Posterior vena cava (tissue), 2 donors: ENCODE measurements at regions of chr13 and their contacts with region 1.

Region 1: DNA sequence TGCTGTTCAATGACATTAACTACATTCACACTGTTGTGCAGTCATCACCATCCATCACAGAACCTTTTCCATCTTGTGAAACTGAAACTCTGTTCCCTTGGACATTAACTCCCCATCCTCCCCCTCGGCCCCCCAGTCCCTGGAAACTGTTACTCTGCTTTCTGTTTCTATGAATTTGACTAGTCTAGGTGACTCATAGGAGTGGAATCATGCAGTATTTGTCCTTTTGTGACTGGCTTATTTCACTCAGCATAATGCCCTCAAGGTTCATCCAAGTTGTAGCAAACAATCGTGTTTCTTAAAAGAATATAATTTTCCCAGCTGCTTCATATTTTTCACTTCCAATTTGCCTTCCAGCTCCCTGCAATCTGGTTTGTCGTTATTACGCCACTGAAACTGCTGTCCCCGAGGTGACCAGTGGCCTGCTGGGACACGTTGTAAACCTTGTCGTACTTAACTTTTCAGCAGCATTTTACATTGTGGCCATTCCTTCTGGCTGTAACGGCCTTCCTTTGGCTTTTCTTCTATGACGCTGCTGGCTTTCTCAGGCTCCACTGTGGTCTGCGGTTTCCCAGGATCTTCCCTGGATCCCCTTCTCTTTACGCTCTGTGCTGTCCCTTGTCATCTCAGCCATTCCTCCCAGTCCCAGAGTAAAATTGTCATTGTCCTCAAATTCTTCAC is 74.0 kb downstream of the DHRS12 start:
- DNase-seq: peak; percentile 90

Region 2: GRCh38 chr13:51222037-51222685 is 507.8 kb before region 1 on chr13 and contains the start of gene FAM124A:
- intact Hi-C with region 1: loop called in 1 of 2 experiments (anchors 10 kb)
- DNase-seq: no peak
- total RNA-seq, gene FAM124A: 6.2 to 9.8 TPM

Region 3: DNA sequence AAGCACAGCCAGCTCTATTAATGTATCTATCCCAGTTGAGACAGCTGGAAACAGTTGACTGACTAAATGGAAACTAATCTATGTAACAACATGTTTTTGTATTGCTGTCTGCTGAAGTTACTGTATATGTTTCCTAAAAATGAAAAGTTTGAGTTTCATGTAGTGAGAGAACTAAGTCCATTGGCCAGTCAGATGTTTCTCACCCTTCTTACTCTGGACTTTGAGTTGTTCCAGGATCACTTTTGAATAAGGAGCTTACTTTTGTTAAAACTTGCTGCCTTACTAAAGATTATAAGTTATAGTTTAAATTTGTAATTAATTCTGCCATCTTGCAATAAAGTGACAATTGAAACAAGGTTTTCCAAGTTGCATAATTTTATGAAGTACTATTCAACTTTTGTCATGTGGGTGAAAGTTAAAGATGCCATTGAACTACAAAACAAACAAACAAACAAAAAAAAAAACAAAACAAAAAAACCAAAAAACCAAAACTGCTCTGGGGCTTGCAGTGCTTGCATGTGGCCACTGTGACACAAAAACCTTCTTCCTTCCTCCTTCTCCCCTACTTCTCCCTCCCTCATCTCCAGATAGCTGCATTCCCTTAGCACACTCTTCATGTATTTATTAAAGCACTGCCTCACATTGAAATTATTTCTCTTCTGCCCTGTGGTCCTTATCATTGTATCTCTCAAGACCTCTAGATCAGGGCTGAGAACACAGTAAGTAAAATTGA is 130.4 kb before region 1 on chr13:
- intact Hi-C with region 1: loop called in 1 of 2 experiments (anchors 5 kb)
- DNase-seq: no peak